ENCODE measurements at regions of chr11 and their contacts with region 1.

Region 1: GRCh38 chr11:117226388-117227385 is 5.2 kb downstream of the PCSK7 start:
- DNase-seq: no peak
- H3K4me3 ChIP-seq: no peak overlapping the region
- H3K27ac ChIP-seq: peak overlapping the region; percentile 88 to 91
- H3K4me1 ChIP-seq: peaks cover 0 to 61% (median 41%) of the 10 kb centered on the region in 4 donors
- H3K27me3 ChIP-seq: no peaks in the 10 kb centered on the region
- CTCF ChIP-seq: peak; percentile 71 to 91

Region 2: DNA sequence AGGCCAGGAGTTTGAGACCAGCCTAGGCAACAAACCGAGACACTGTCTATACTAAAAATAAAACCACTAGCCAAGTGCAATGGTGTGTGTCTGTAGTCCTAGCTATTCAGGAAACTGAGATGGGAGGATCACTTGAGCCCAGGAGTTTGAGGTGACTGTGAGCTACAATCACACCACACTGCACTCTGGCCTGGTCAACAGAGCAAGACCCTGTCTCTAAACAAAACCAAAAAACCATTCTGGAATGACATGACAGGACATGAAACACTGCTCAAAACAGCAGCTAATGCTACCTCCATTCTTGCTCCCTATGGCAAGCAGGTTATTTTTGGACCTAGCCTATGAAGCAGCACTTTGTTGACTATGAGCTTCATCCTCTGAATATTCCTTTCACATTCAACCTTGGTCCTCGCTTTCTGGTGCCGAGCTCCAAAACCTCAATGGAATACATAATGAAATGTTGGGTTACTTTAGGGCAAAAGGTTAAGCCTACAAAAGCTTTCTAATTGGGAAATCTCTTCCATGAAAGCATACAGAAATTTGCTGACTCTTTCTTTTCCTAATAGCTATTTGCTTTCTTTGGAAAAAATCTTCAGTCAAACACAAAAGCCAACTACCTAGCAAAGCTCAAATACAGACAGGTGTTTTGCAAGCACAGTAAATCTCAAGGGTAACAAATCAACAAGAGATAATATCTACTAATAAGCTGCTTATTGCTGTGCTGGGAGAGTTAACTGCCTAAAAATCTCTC is 149.6 kb before region 1 on chr11:
- intact Hi-C with region 1: no loop called
- DNase-seq: no peak
- H3K4me3 ChIP-seq: no peak overlapping the region
- H3K27ac ChIP-seq: no peak overlapping the region
- H3K4me1 ChIP-seq: peaks cover 0 to 67% (median 32%) of the 10 kb centered on the region in 4 donors
- H3K27me3 ChIP-seq: no peaks in the 10 kb centered on the region
- CTCF ChIP-seq: no peak

Region 3: GRCh38 chr11:117098269-117099232 is 128.1 kb before region 1 on chr11 and contains the start of gene SIK3:
- intact Hi-C with region 1: loop called (anchors 5 kb)
- DNase-seq: peak; percentile 85 to 95
- H3K4me3 ChIP-seq: peak within 1 kb of the TSS; percentile 92 to 94
- H3K27ac ChIP-seq: peak within 1 kb of the TSS; percentile 94 to 99
- H3K4me1 ChIP-seq: peaks cover 0 to 49% (median 29%) of the 10 kb centered on the region in 4 donors
- H3K27me3 ChIP-seq: no peaks in the 10 kb centered on the region
- CTCF ChIP-seq: peak in 1 of 2 experiments; percentile 9

Region 4: GRCh38 chr11:117180661-117181585 is 45.8 kb before region 1 on chr11:
- intact Hi-C with region 1: loop called (anchors 5 kb)
- DNase-seq: peak; percentile 82 to 89
- H3K4me3 ChIP-seq: peak overlapping the region in 1 of 2 donors; percentile 97
- H3K27ac ChIP-seq: peak overlapping the region; percentile 98 to 100
- H3K4me1 ChIP-seq: peaks cover 6 to 38% (median 32%) of the 10 kb centered on the region in 4 donors
- H3K27me3 ChIP-seq: no peaks in the 10 kb centered on the region
- CTCF ChIP-seq: peak; percentile 54 to 71

Measured in tibial artery (tissue), 4 donors.